ENCODE measurements at regions of chr16 and their contacts with region 1.

Region 1: GRCh38 chr16:31215287-31216162 is 1.4 kb downstream of the PYDC1 start:
- DNase-seq: peak; percentile 89
- ATAC-seq: peak; percentile 85
- H3K4me3 Mint-ChIP-seq: peak overlapping the region; percentile 77
- H3K27ac Mint-ChIP-seq: no peak overlapping the region
- H3K4me1 Mint-ChIP-seq: peaks cover 30% of the 10 kb centered on the region
- H3K27me3 Mint-ChIP-seq: peaks cover 57% of the 10 kb centered on the region
- CTCF ChIP-seq: no peak

Region 2: DNA sequence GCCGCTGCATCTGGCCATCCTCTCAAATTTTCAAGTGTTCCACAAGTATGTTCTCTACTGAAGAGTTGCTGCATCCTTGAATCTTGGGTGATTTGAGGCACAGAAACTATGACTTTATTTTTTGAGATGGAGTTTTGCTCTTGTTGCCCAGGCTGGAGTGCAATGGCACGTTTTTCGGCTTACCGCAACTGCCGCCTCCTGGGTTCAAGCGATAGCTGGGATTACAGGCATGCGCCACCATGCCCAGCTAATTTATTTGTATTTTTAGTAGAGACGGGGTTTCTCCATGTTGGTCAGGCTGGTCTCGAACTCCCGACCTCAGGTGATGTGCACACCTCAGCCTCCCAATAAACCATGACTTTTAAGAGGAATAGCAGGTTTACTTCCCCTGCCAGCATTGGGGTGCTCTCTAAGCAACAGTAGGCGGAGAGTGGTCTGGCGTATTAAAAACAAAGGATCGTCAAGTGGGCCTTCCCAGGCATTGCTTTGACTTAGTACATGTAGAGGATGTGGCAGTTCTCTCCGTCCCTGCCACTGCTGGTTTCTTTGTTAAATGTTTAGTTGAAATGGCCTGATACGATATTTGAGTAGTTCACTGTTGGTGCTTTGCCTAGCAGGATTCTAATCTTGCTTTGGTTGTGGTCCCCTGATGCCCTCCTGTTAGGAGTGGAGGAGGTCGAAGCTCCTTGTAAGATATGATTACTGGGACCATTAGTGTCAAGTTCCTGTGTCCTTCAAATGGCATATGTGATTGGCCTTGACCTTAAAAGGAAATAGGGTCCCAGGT is 22.5 kb before region 1 on chr16:
- CTCF ChIA-PET with region 1: no interaction called
- POLR2A ChIA-PET with region 1: no interaction called
- DNase-seq: no peak
- ATAC-seq: no peak
- H3K4me3 Mint-ChIP-seq: no peak overlapping the region
- H3K27ac Mint-ChIP-seq: peak overlapping the region; percentile 61
- H3K4me1 Mint-ChIP-seq: no peaks in the 10 kb centered on the region
- H3K27me3 Mint-ChIP-seq: no peaks in the 10 kb centered on the region
- CTCF ChIP-seq: no peak

Region 3: GRCh38 chr16:31333686-31334649 is 118.4 kb after region 1 on chr16:
- CTCF ChIA-PET with region 1: interaction called, 11 read pairs
- POLR2A ChIA-PET with region 1: interaction called, 5 read pairs
- DNase-seq: peak; percentile 54
- ATAC-seq: peak; percentile 86
- H3K4me3 Mint-ChIP-seq: no peak overlapping the region
- H3K27ac Mint-ChIP-seq: no peak overlapping the region
- H3K4me1 Mint-ChIP-seq: peaks cover 17% of the 10 kb centered on the region
- H3K27me3 Mint-ChIP-seq: peaks cover 61% of the 10 kb centered on the region
- CTCF ChIP-seq: no peak